ENCODE measurements at regions of chr3 and their contacts with region 1.

Region 1: GRCh38 chr3:194472290-194472920 is 14.4 kb downstream of the ATP13A3 start:
- DNase-seq: peak; percentile 50 to 62 (median 57)
- H3K4me3 ChIP-seq: no peak overlapping the region
- H3K4me3 Mint-ChIP-seq: no peak overlapping the region
- H3K27ac ChIP-seq: no peak overlapping the region
- H3K27ac Mint-ChIP-seq: peak overlapping the region in 1 of 7 donors; percentile 59
- H3K4me1 ChIP-seq: peaks cover 22% of the 10 kb centered on the region
- H3K4me1 Mint-ChIP-seq: peaks cover 6 to 14% (median 7%) of the 10 kb centered on the region in 4 donors
- H3K27me3 ChIP-seq: no peaks in the 10 kb centered on the region
- H3K27me3 Mint-ChIP-seq: no peaks in the 10 kb centered on the region

Region 2: DNA sequence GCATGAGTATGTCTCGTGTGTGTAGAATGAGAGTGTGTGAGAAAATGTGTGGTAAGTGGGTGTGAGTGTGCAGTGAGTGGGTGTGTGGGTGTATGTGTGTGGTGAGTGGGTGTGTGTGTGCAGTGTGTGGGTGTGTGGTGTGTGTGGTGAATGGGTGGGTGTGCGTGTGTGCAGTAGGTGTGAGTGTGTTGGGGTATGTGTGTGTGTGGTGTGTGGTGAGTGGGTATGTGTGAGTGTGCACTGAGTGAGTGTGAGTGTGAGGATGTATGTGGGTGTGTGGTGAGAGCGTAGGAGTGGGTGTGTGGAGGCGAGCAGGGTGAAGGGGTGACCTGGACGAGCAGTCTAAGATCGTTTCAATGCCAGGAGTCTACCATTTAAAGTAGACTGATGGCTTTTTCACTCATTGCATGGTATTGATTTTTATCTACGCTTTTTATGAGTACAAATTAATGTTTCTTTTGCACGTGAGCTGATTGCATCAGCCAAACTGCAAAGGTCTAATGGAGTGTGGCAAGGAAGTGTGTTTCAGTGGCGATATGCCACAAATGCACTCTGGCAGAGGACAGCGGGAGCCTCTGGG is 119.6 kb before region 1 on chr3:
- CTCF ChIA-PET with region 1: no interaction called
- POLR2A ChIA-PET with region 1: no interaction called
- intact Hi-C with region 1: no loop called
- DNase-seq: no peak
- H3K4me3 ChIP-seq: no peak overlapping the region
- H3K4me3 Mint-ChIP-seq: no peak overlapping the region
- H3K27ac ChIP-seq: no peak overlapping the region
- H3K27ac Mint-ChIP-seq: no peak overlapping the region
- H3K4me1 ChIP-seq: no peaks in the 10 kb centered on the region
- H3K4me1 Mint-ChIP-seq: no peaks in the 10 kb centered on the region
- H3K27me3 ChIP-seq: no peaks in the 10 kb centered on the region
- H3K27me3 Mint-ChIP-seq: peaks cover 2 to 4% of the 10 kb centered on the region in 2 donors

Region 3: DNA sequence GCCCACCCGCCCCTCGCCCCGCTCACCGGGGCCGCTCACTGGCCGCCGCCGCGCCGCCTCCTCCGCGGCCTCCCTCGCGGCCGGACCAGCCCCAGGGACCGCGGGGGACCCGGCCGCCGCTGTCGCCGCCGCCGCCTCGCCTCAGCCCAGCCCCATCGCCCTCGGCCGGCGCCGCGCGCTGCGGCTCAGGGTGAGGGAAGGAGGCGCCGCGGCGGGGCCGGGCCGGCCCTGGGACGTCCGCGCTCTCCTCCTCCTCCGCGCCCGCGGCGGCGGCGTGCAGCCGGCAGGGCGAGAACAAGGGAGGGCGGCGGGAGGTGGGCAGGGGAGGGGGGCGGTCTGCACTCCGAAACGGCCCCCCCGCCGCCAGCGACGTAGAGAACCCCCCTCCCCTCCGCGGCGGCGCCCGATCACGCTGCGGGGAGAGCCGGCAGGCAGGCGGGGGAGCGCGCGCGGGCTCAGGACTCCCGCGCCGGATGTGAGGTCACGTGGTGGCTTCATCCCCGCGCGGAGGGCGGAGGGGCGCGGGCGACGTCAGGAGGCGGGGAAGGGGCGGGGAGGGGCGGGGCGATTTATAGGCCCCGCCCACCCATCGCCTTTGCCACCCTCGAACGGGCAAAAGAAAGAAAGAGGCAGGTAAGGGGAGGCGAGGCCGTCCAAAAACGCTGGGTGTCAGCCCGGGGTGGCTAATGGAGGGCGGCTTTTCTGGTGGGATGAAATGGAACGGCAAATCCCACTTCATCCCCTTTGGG is 14.3 kb after region 1 on chr3 and contains the start of gene ATP13A3:
- CTCF ChIA-PET with region 1: interaction called, 25 read pairs
- POLR2A ChIA-PET with region 1: interaction called, 9 read pairs
- intact Hi-C with region 1: no loop called
- DNase-seq: peak; percentile 92 to 94 (median 92)
- H3K4me3 ChIP-seq: peak within 1 kb of the TSS; percentile 67 to 90
- H3K4me3 Mint-ChIP-seq: peak within 1 kb of the TSS; percentile 93 to 98 (median 94)
- H3K27ac ChIP-seq: peak within 1 kb of the TSS; percentile 75
- H3K27ac Mint-ChIP-seq: peak within 1 kb of the TSS; percentile 90 to 98 (median 95)
- H3K4me1 ChIP-seq: peaks cover 41% of the 10 kb centered on the region
- H3K4me1 Mint-ChIP-seq: peaks cover 27 to 52% (median 40%) of the 10 kb centered on the region in 4 donors
- H3K27me3 ChIP-seq: no peaks in the 10 kb centered on the region
- H3K27me3 Mint-ChIP-seq: no peaks in the 10 kb centered on the region
- total RNA-seq, gene ATP13A3: 57.6 to 62.7 TPM

Region 4: DNA sequence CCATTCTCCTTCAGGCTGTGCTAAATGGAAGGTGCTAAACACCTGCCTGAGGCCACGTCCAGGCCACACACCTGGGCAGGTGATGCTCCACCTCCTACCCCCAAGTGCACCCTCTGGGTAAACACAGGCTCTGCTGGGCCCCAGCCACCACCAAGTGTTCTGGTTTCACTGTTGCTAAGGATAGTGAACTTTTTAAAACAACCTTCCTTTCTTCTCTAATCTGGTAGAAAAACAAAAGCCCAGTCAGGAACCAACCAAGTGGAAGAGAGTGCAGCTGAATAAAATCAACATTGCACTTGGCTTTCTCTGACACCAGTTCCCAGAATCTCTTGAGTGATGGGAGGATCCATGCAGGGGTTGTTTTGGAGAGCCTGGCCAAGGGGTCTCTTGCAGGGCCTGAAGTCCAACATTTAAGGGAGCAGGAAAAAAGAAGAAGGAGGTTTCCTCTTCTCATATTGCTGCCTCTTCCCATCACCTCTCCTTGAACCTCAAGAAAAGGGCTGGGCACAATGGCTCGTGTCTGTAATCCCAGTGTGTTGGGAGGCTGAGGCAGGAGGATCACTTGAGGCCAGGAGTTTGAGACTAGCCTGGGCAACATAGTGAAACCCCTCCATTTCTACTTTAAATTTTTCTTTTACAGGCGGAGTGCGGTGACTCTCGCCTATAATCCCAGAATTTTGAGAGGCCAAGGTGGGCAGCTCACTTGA is 40.6 kb after region 1 on chr3:
- CTCF ChIA-PET with region 1: interaction called, 16 read pairs
- POLR2A ChIA-PET with region 1: no interaction called
- intact Hi-C with region 1: loop called (anchors 1 kb)
- DNase-seq: no peak
- H3K4me3 ChIP-seq: no peak overlapping the region
- H3K4me3 Mint-ChIP-seq: no peak overlapping the region
- H3K27ac ChIP-seq: no peak overlapping the region
- H3K27ac Mint-ChIP-seq: no peak overlapping the region
- H3K4me1 ChIP-seq: no peaks in the 10 kb centered on the region
- H3K4me1 Mint-ChIP-seq: no peaks in the 10 kb centered on the region
- H3K27me3 ChIP-seq: no peaks in the 10 kb centered on the region
- H3K27me3 Mint-ChIP-seq: no peaks in the 10 kb centered on the region

Region 5: GRCh38 chr3:194573691-194574437 is 101.5 kb after region 1 on chr3:
- CTCF ChIA-PET with region 1: interaction called, 133 read pairs
- POLR2A ChIA-PET with region 1: no interaction called
- intact Hi-C with region 1: loop called (anchors 1 kb)
- DNase-seq: peak in 4 of 5 donors; percentile 15 to 38 (median 32)
- H3K4me3 ChIP-seq: no peak overlapping the region
- H3K4me3 Mint-ChIP-seq: no peak overlapping the region
- H3K27ac ChIP-seq: no peak overlapping the region
- H3K27ac Mint-ChIP-seq: peak overlapping the region in 1 of 7 donors; percentile 58
- H3K4me1 ChIP-seq: no peaks in the 10 kb centered on the region
- H3K4me1 Mint-ChIP-seq: no peaks in the 10 kb centered on the region
- H3K27me3 ChIP-seq: no peaks in the 10 kb centered on the region
- H3K27me3 Mint-ChIP-seq: peaks cover 18 to 35% of the 10 kb centered on the region in 2 donors

Region 6: DNA sequence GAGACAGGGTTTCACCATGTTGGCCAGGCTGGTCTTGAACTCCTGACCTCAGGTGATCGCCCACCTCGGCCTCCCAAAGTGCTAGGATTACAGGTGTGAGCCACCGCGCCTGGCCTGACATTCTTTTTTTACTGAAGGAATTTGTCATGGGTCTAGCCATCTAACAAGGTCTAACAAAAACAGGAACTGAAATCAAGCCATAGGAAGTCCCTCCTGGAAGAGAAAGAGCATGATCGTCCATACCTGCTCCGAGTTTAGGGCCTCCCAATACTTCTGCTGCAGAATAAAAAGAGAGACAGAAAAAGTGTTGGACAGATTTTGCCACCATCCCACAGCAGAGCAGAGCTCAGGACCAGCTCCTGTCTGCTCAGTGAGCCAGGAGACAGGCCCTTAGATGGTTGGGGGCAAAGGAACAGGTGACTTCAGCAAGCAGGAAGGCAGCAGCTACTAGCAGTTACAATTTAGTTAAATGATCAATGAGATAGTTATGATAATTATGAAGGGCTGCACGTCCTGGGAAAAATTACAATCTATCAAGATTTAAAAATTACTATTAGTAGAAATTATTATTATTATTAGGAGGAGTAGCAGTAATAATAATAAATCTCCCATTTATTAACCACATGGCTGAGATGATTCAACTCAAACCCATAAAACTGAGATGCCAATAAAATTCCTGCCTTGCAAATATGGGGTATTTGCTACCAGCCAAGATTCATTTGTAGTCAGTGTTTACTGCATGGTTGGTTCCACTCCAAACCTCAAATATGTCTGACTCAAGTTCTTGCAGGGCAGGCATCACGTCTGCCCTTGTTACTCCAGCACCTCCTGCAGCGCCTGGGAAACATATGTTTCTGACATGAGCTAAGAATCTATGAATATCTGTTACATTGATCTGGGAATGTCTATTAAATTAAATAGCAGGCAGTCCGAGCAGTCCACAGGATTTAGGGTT is 120.7 kb after region 1 on chr3:
- CTCF ChIA-PET with region 1: interaction called, 84 read pairs
- POLR2A ChIA-PET with region 1: interaction called, 5 read pairs
- intact Hi-C with region 1: loop called (anchors 1 kb)
- DNase-seq: no peak
- H3K4me3 ChIP-seq: no peak overlapping the region
- H3K4me3 Mint-ChIP-seq: no peak overlapping the region
- H3K27ac ChIP-seq: no peak overlapping the region
- H3K27ac Mint-ChIP-seq: no peak overlapping the region
- H3K4me1 ChIP-seq: no peaks in the 10 kb centered on the region
- H3K4me1 Mint-ChIP-seq: peaks cover 0 to 6% (median 2%) of the 10 kb centered on the region in 4 donors
- H3K27me3 ChIP-seq: no peaks in the 10 kb centered on the region
- H3K27me3 Mint-ChIP-seq: no peaks in the 10 kb centered on the region

Region 7: DNA sequence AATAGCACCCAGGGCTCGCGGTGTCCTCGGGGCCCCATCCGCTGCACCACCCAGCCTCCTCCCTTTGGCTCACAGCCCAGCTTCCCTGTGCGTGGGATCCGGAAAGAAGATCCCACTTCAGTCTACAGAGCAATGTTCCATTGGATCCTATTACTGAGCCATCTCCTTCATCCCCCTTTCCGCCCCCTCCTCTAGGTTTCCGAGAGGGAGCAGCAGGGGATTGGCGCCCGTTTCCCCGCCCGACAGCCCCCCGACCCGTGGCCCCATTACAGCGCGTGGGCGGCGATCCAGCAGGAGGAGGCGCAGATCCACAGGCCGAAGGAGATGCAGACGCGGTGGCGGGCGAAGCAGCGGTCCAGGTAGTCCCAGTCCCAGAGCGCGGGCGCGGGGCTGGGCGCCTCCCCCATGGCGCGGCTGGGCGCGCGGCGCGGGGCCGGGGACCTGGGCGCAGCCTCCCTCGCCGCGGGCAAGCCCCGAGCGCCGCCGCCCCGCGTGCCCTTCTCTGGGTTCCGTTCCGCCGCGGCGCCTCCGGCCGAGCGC is 160.5 kb after region 1 on chr3:
- CTCF ChIA-PET with region 1: interaction called, 3 read pairs
- POLR2A ChIA-PET with region 1: no interaction called
- intact Hi-C with region 1: loop called (anchors 1 kb)
- DNase-seq: no peak
- H3K4me3 ChIP-seq: peak overlapping the region; percentile 31 to 64
- H3K4me3 Mint-ChIP-seq: peak overlapping the region; percentile 82 to 86 (median 82)
- H3K27ac ChIP-seq: no peak overlapping the region
- H3K27ac Mint-ChIP-seq: peak overlapping the region in 4 of 7 donors; percentile 22 to 72 (median 54)
- H3K4me1 ChIP-seq: peaks cover 7% of the 10 kb centered on the region
- H3K4me1 Mint-ChIP-seq: peaks cover 3 to 27% (median 10%) of the 10 kb centered on the region in 4 donors
- H3K27me3 ChIP-seq: no peaks in the 10 kb centered on the region
- H3K27me3 Mint-ChIP-seq: no peaks in the 10 kb centered on the region

Measured in CD4-positive, alpha-beta memory T cell (primary cell).